B cell (primary cell): ENCODE measurements at regions of chr15 and their contacts with region 1.

Region 1: GRCh38 chr15:32936283-32936918 is 218.6 kb downstream of the GREM1 start:
- DNase-seq: peak; percentile 40
- ATAC-seq: peak; percentile 43
- H3K4me3 ChIP-seq: no peak overlapping the region
- H3K4me3 Mint-ChIP-seq: no peak overlapping the region
- H3K27ac ChIP-seq: no peak overlapping the region
- H3K27ac Mint-ChIP-seq: no peak overlapping the region
- H3K4me1 ChIP-seq: no peaks in the 10 kb centered on the region
- H3K4me1 Mint-ChIP-seq: no peaks in the 10 kb centered on the region
- H3K27me3 ChIP-seq: peaks cover 0 to 8% (median 1%) of the 10 kb centered on the region in 4 experiments
- H3K27me3 Mint-ChIP-seq: peaks cover 55% of the 10 kb centered on the region
- CTCF ChIP-seq: peak; percentile 47

Region 2: DNA sequence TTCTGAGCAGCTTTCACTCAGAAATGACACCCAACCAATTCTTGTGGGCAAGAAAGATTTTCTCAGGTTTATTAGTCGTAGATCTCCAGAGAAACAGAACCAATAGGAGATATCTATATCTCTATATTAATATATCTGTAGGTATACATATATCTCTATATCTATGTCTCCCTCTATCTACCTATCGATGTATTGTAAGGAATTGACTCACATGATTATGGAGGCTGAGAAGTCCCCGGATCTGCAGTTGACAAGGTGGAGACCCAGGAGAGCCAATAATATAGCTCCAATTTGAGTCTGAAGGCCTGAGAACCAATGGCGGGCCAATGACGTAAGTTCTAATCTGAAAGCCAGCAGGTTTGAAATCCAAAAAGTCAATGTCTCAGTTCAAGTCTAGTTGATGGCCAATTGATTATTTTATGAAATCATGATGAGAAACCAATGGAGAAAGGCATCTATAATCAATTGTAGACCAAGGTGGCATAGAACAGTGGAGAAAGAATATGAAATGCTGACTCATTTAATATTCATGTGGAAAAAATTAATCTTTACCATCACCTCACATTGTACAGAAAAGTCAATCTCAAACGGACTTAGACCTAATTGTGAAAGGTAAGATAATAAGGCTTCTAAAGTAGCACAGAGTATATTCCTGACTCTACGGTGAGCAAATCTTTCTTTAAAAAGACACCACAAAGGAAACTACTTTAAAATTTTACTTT is 971.7 kb before region 1 on chr15:
- CTCF ChIA-PET with region 1: no interaction called
- POLR2A ChIA-PET with region 1: no interaction called
- intact Hi-C with region 1: no loop called
- DNase-seq: no peak
- ATAC-seq: no peak
- H3K4me3 ChIP-seq: no peak overlapping the region
- H3K4me3 Mint-ChIP-seq: no peak overlapping the region
- H3K27ac ChIP-seq: no peak overlapping the region
- H3K27ac Mint-ChIP-seq: no peak overlapping the region
- H3K4me1 ChIP-seq: no peaks in the 10 kb centered on the region
- H3K4me1 Mint-ChIP-seq: no peaks in the 10 kb centered on the region
- H3K27me3 ChIP-seq: peaks cover 0 to 3% (median 0%) of the 10 kb centered on the region in 4 experiments
- H3K27me3 Mint-ChIP-seq: peaks cover 24% of the 10 kb centered on the region
- CTCF ChIP-seq: no peak

Region 3: GRCh38 chr15:32657198-32657883 is 279.1 kb before region 1 on chr15:
- CTCF ChIA-PET with region 1: interaction called, 37 read pairs
- POLR2A ChIA-PET with region 1: no interaction called
- intact Hi-C with region 1: loop called (anchors 1 kb)
- DNase-seq: no peak
- ATAC-seq: no peak
- H3K4me3 ChIP-seq: no peak overlapping the region
- H3K4me3 Mint-ChIP-seq: no peak overlapping the region
- H3K27ac ChIP-seq: no peak overlapping the region
- H3K27ac Mint-ChIP-seq: no peak overlapping the region
- H3K4me1 ChIP-seq: no peaks in the 10 kb centered on the region
- H3K4me1 Mint-ChIP-seq: peaks cover 3% of the 10 kb centered on the region
- H3K27me3 ChIP-seq: no peaks in the 10 kb centered on the region
- H3K27me3 Mint-ChIP-seq: no peaks in the 10 kb centered on the region
- CTCF ChIP-seq: no peak

Region 4: GRCh38 chr15:32818758-32819447 is 117.5 kb before region 1 on chr15:
- CTCF ChIA-PET with region 1: no interaction called
- POLR2A ChIA-PET with region 1: no interaction called
- intact Hi-C with region 1: no loop called
- DNase-seq: no peak
- ATAC-seq: no peak
- H3K4me3 ChIP-seq: no peak overlapping the region
- H3K4me3 Mint-ChIP-seq: no peak overlapping the region
- H3K27ac ChIP-seq: no peak overlapping the region
- H3K27ac Mint-ChIP-seq: no peak overlapping the region
- H3K4me1 ChIP-seq: no peaks in the 10 kb centered on the region
- H3K4me1 Mint-ChIP-seq: no peaks in the 10 kb centered on the region
- H3K27me3 ChIP-seq: peaks cover 0 to 1% (median 0%) of the 10 kb centered on the region in 4 experiments
- H3K27me3 Mint-ChIP-seq: peaks cover 27% of the 10 kb centered on the region
- CTCF ChIP-seq: no peak

Region 5: GRCh38 chr15:32834156-32834555 is 102.2 kb before region 1 on chr15:
- CTCF ChIA-PET with region 1: interaction called, 10 read pairs
- POLR2A ChIA-PET with region 1: no interaction called
- intact Hi-C with region 1: no loop called
- DNase-seq: peak; percentile 63
- ATAC-seq: peak; percentile 99
- H3K4me3 ChIP-seq: no peak overlapping the region
- H3K4me3 Mint-ChIP-seq: peak overlapping the region; percentile 33
- H3K27ac ChIP-seq: no peak overlapping the region
- H3K27ac Mint-ChIP-seq: peak overlapping the region; percentile 12
- H3K4me1 ChIP-seq: peaks cover 10 to 13% of the 10 kb centered on the region in 2 donors
- H3K4me1 Mint-ChIP-seq: peaks cover 16% of the 10 kb centered on the region
- H3K27me3 ChIP-seq: peaks cover 0 to 3% (median 1%) of the 10 kb centered on the region in 4 experiments
- H3K27me3 Mint-ChIP-seq: peaks cover 21% of the 10 kb centered on the region
- CTCF ChIP-seq: no peak

Region 6: GRCh38 chr15:32878869-32879805 is 57.3 kb before region 1 on chr15:
- CTCF ChIA-PET with region 1: interaction called, 10 read pairs
- POLR2A ChIA-PET with region 1: no interaction called
- intact Hi-C with region 1: loop called (anchors 1 kb)
- DNase-seq: no peak
- ATAC-seq: no peak
- H3K4me3 ChIP-seq: no peak overlapping the region
- H3K4me3 Mint-ChIP-seq: no peak overlapping the region
- H3K27ac ChIP-seq: no peak overlapping the region
- H3K27ac Mint-ChIP-seq: no peak overlapping the region
- H3K4me1 ChIP-seq: no peaks in the 10 kb centered on the region
- H3K4me1 Mint-ChIP-seq: no peaks in the 10 kb centered on the region
- H3K27me3 ChIP-seq: no peaks in the 10 kb centered on the region
- H3K27me3 Mint-ChIP-seq: peaks cover 4% of the 10 kb centered on the region
- CTCF ChIP-seq: no peak

Region 7: DNA sequence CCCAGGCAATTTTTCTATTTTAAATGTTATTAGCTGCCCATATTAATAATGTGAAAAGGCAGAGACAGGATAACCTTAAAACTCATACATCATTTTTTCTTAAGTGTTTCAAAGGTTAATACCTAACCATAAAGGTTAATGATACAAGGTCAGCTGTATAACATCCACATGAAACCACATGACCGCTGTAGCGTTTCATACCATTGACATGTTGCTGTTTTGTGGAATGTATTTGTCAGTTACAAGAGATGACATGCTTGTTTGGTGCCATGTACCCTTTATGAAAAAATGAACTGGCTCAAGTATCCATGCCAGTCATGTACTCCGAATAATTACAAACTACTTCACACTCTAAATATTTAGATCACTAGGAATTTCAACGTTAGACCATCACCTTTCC is 50.7 kb after region 1 on chr15:
- CTCF ChIA-PET with region 1: no interaction called
- POLR2A ChIA-PET with region 1: no interaction called
- intact Hi-C with region 1: no loop called
- DNase-seq: no peak
- ATAC-seq: no peak
- H3K4me3 ChIP-seq: no peak overlapping the region
- H3K4me3 Mint-ChIP-seq: no peak overlapping the region
- H3K27ac ChIP-seq: no peak overlapping the region
- H3K27ac Mint-ChIP-seq: no peak overlapping the region
- H3K4me1 ChIP-seq: no peaks in the 10 kb centered on the region
- H3K4me1 Mint-ChIP-seq: no peaks in the 10 kb centered on the region
- H3K27me3 ChIP-seq: no peaks in the 10 kb centered on the region
- H3K27me3 Mint-ChIP-seq: peaks cover 17% of the 10 kb centered on the region
- CTCF ChIP-seq: no peak